ENCODE measurements at regions of chr10 and their contacts with region 1.

Region 1: DNA sequence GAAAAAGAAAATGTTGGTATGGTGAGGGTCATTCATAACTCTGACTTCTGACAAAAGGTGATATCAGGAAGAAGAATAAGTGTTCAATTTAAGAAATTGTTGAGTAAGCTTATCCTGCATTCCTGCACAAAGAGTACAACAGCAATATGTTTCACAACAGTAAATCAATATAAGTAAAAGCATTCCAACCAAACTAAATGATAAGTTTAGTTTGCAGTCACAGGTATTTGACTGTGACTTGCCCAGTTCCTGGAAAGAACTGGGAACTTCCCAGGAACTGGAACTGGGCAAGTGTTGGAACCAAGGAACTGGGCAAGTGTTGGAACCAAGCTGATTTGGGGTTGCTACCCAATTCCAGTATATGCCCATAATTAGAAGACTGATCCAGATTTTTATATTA is 35.1 kb downstream of the NEURL1 start:
- DNase-seq: no peak
- H3K4me3 ChIP-seq: no peak overlapping the region
- H3K27ac ChIP-seq: peak overlapping the region; percentile 94
- H3K4me1 ChIP-seq: peaks cover 16% of the 10 kb centered on the region
- H3K27me3 ChIP-seq: no peaks in the 10 kb centered on the region
- CTCF ChIP-seq: no peak

Region 2: DNA sequence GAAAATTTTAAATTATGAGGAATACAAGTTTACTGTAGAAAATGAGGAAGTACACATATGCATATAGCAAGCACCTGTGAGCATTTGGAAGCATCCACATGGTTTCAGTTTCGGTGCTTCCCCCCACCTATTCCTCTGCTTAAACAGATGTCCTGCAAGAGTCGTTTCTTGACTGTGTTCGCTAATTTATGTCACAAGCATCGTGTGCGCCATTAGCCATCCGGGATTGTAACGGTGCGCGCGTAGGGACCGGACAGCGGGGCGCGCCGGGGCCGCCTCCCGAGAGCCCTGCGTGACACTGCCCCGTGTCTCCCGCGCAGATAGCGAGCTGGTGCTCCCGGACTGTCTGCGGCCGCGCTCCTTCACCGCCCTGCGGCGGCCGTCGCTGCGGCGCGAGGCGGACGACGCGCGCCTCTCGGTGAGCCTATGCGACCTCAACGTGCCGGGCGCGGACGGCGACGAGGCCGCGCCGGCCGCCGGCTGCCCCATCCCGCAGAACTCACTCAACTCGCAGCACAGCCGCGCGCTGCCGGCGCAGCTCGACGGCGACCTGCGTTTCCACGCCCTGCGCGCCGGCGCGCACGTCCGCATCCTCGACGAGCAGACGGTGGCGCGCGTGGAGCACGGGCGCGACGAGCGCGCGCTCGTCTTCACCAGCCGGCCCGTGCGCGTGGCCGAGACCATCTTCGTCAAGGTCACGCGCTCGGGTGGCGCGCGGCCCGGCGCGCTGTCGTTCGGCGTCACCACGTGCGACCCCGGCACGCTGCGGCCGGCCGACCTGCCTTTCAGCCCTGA is 55.9 kb after region 1 on chr10:
- CTCF ChIA-PET with region 1: no interaction called
- dilution Hi-C with region 1: no loop called
- in situ Hi-C with region 1: no loop called
- intact Hi-C with region 1: loop called (anchors 5 kb)
- DNase-seq: no peak
- H3K4me3 ChIP-seq: no peak overlapping the region
- H3K27ac ChIP-seq: no peak overlapping the region
- H3K4me1 ChIP-seq: no peaks in the 10 kb centered on the region
- H3K27me3 ChIP-seq: no peaks in the 10 kb centered on the region
- CTCF ChIP-seq: no peak

Measured in mammary epithelial cell (primary cell).